Ascending aorta (tissue), 2 donors: ENCODE measurements at regions of chr18 and their contacts with region 1.

Region 1: GRCh38 chr18:59823596-59824195 is 76.1 kb upstream of the PMAIP1 start:
- DNase-seq: peak in 1 of 2 donors; percentile 66
- H3K4me3 ChIP-seq: no peak overlapping the region
- H3K27ac ChIP-seq: no peak overlapping the region
- H3K4me1 ChIP-seq: no peaks in the 10 kb centered on the region
- H3K27me3 ChIP-seq: no peaks in the 10 kb centered on the region
- CTCF ChIP-seq: peak; percentile 42 to 69 (median 42)

Region 2: DNA sequence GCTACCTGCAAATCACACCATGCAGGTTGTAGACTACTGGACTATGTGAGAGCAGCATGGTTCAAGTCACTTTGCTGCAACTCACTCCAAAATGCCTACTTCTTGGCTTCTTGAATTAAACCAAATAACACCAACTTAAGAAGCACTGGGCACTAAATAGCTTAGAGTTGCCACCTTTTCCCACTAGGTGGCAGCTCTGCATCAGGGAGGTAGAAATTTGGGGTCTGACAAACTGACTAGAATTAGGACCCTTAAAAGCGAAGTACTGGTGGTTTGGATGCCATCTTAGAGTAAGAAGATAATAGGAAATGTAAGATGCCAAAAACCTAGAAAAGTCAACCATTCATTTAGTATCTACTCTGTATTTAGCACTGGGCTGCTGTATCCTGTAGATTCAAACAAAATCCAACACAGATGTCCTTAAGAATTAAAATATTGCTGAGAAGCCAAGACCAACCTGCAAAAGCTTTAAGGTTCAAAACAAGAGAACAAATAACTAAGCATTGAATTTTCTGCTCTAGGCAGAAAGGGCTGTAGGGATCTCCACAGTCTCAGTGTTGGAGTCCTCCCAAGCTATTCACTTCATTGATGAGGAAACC is 192.0 kb before region 1 on chr18:
- intact Hi-C with region 1: loop called (anchors 5 kb)
- DNase-seq: no peak
- H3K4me3 ChIP-seq: no peak overlapping the region
- H3K27ac ChIP-seq: no peak overlapping the region
- H3K4me1 ChIP-seq: no peaks in the 10 kb centered on the region
- H3K27me3 ChIP-seq: no peaks in the 10 kb centered on the region
- CTCF ChIP-seq: peak in 1 of 3 experiments; percentile 39

Region 3: DNA sequence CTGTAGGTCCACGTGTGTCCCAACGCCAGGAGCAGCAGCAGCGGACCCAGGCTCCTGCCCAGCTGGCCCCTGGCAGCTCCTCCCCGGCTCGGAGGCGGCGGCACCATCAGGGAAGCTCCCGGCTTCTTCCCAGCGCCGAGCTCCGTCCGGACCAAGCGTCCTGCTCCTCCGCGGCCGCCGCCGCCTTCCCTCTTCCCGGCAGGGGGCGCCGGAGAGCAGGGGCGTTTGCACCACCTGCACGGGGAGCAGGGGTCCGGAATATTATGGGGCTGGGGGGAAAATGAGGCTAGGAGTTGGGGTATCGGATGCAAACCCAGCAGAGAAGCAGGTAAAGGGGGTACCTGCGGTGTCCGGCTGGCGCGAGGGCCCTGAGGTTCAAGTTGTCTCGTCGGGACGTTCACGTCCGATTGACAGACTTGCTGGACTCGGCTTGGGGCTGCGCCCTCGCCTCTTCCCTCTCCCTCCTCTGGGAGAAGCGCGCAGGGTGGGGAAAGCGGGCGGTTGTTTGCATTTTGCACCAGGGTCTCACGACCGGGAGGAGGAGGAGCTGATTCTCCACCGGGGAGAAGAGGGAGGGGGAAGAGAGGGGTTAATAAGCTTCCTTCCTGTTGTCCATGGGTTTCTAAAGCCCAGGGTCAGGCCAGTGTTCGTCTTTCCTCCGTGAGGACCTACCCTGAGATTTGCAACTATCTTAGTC is 126.3 kb before region 1 on chr18 and contains the start of gene CCBE1:
- intact Hi-C with region 1: loop called (anchors 5 kb)
- DNase-seq: no peak
- H3K4me3 ChIP-seq: peak within 1 kb of the TSS; percentile 42 to 48
- H3K27ac ChIP-seq: no peak within 1 kb of the TSS
- H3K4me1 ChIP-seq: peaks cover 0 to 6% of the 10 kb centered on the region in 2 donors
- H3K27me3 ChIP-seq: no peaks in the 10 kb centered on the region
- CTCF ChIP-seq: peak; percentile 28 to 68 (median 45)
- total RNA-seq, gene CCBE1: 0.32 TPM

Region 4: GRCh38 chr18:59846814-59847490 is 23.3 kb after region 1 on chr18:
- intact Hi-C with region 1: no loop called
- DNase-seq: no peak
- H3K4me3 ChIP-seq: no peak overlapping the region
- H3K27ac ChIP-seq: no peak overlapping the region
- H3K4me1 ChIP-seq: no peaks in the 10 kb centered on the region
- H3K27me3 ChIP-seq: no peaks in the 10 kb centered on the region
- CTCF ChIP-seq: no peak

Region 5: DNA sequence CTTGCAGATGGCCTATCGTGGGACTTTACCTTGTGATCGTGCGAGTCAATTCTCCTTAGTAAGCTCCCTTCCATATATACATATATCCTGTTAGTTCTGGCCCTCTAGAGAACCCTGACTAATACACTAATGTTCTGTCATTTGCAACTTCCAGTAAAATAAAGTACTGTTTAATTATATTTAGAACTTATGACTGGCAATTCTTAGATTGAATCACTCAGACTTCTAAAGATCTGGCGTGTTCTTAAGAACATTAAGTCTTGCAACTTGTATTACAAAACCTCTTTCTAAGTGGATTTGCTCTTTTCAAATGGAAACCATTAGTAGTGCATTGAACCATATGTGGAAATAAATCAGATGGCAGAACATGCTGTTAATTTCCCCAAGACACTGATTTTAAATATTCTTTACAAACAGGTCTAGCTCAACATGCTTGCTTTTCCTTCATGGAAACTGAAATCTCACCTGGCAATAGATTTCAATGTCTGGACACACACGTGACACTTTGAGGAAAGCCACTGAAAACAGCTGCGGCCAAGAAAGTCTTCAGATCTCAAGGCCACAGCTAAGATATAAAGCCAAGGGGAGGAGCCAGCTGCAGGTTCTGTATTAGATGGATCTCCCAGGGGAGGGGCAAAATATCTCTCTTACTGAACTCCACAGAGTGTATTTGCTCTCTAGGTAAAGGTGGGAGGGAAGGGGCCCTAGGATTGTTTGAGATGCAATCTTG is 126.7 kb after region 1 on chr18:
- intact Hi-C with region 1: no loop called
- DNase-seq: no peak
- H3K4me3 ChIP-seq: no peak overlapping the region
- H3K27ac ChIP-seq: no peak overlapping the region
- H3K4me1 ChIP-seq: no peaks in the 10 kb centered on the region
- H3K27me3 ChIP-seq: no peaks in the 10 kb centered on the region
- CTCF ChIP-seq: no peak